H1 (cell line): ENCODE measurements at regions of chr1 and their contacts with region 1.

Region 1: GRCh38 chr1:89605692-89606091 is 27.2 kb upstream of the LRRC8C start:
- DNase-seq: no peak
- H3K4me3 ChIP-seq: no peak overlapping the region
- H3K27ac ChIP-seq: no peak overlapping the region
- H3K4me1 ChIP-seq: no peaks in the 10 kb centered on the region
- H3K27me3 ChIP-seq: no peaks in the 10 kb centered on the region; a peak in 1 of 7 replicates
- CTCF ChIP-seq: no peak
- EP300 ChIP-seq: no peak
- POLR2A ChIP-seq: no peak
- RAD21 ChIP-seq: no peak

Region 2: GRCh38 chr1:89519779-89520358 is 85.8 kb before region 1 on chr1:
- CTCF ChIA-PET with region 1: interaction called, 18 read pairs
- POLR2A ChIA-PET with region 1: no interaction called
- DNase-seq: no peak
- H3K4me3 ChIP-seq: no peak overlapping the region
- H3K27ac ChIP-seq: no peak overlapping the region
- H3K4me1 ChIP-seq: peaks cover 0 to 8% (median 0%) of the 10 kb centered on the region in 4 experiments; a peak in 3 of 7 replicates
- H3K27me3 ChIP-seq: no peaks in the 10 kb centered on the region
- CTCF ChIP-seq: peak; percentile 17 to 59 (median 53)
- EP300 ChIP-seq: no peak
- POLR2A ChIP-seq: no peak
- RAD21 ChIP-seq: peak; percentile 71 to 73

Region 3: GRCh38 chr1:89622895-89623294 is 17.2 kb after region 1 on chr1:
- CTCF ChIA-PET with region 1: interaction called, 18 read pairs
- POLR2A ChIA-PET with region 1: interaction called, 3 read pairs
- DNase-seq: no peak
- H3K4me3 ChIP-seq: no peak overlapping the region
- H3K27ac ChIP-seq: no peak overlapping the region
- H3K4me1 ChIP-seq: no peaks in the 10 kb centered on the region
- H3K27me3 ChIP-seq: no peaks in the 10 kb centered on the region; a peak in 1 of 7 replicates
- CTCF ChIP-seq: peak in 2 of 3 experiments; percentile 20 to 28; a peak in 2 of 4 replicates
- EP300 ChIP-seq: no peak
- POLR2A ChIP-seq: no peak
- RAD21 ChIP-seq: peak; percentile 43 to 52

Region 4: GRCh38 chr1:89632657-89633247 is 27.1 kb after region 1 on chr1 and contains the start of gene LRRC8C:
- CTCF ChIA-PET with region 1: interaction called, 12 read pairs
- POLR2A ChIA-PET with region 1: no interaction called
- DNase-seq: peak in 1 of 2 experiments; percentile 87
- H3K4me3 ChIP-seq: peak within 1 kb of the TSS; percentile 57 to 74 (median 72)
- H3K27ac ChIP-seq: no peak within 1 kb of the TSS
- H3K4me1 ChIP-seq: peaks cover 0 to 10% (median 7%) of the 10 kb centered on the region in 4 experiments; a peak in 5 of 7 replicates
- H3K27me3 ChIP-seq: peaks cover 0 to 23% (median 18%) of the 10 kb centered on the region in 4 experiments; a peak in 5 of 7 replicates
- CTCF ChIP-seq: peak; percentile 41 to 51 (median 44); a peak in 3 of 4 replicates
- EP300 ChIP-seq: no peak
- POLR2A ChIP-seq: no peak
- RAD21 ChIP-seq: peak; percentile 18 to 63; a peak in 3 of 4 replicates
- total RNA-seq, gene LRRC8C: 2.1 and 2.5 TPM in 2 replicates